ENCODE measurements at regions of chr14 and their contacts with region 1.

Region 1: GRCh38 chr14:94691660-94692034 is 78.3 kb downstream of the GSC start:
- DNase-seq: no peak
- H3K4me3 ChIP-seq: no peak overlapping the region
- H3K4me3 Mint-ChIP-seq: no peak overlapping the region
- H3K27ac ChIP-seq: no peak overlapping the region
- H3K27ac Mint-ChIP-seq: no peak overlapping the region
- H3K4me1 ChIP-seq: peaks cover 6% of the 10 kb centered on the region
- H3K4me1 Mint-ChIP-seq: peaks cover 0 to 3% (median 0%) of the 10 kb centered on the region in 4 donors
- H3K27me3 ChIP-seq: no peaks in the 10 kb centered on the region
- H3K27me3 Mint-ChIP-seq: peaks cover 6 to 12% of the 10 kb centered on the region in 2 donors

Region 2: GRCh38 chr14:94681300-94682060 is 10.2 kb before region 1 on chr14:
- CTCF ChIA-PET with region 1: interaction called, 12 read pairs
- POLR2A ChIA-PET with region 1: no interaction called
- intact Hi-C with region 1: no loop called
- DNase-seq: no peak
- H3K4me3 ChIP-seq: no peak overlapping the region
- H3K4me3 Mint-ChIP-seq: no peak overlapping the region
- H3K27ac ChIP-seq: no peak overlapping the region
- H3K27ac Mint-ChIP-seq: no peak overlapping the region
- H3K4me1 ChIP-seq: no peaks in the 10 kb centered on the region
- H3K4me1 Mint-ChIP-seq: no peaks in the 10 kb centered on the region
- H3K27me3 ChIP-seq: no peaks in the 10 kb centered on the region
- H3K27me3 Mint-ChIP-seq: peaks cover 5 to 8% of the 10 kb centered on the region in 2 donors